Activated naive CD8-positive, alpha-beta T cell treated with anti-CD3 and anti-CD28 coated beads, Interleukin-2, amount 10 ng/mL, durations not matched to agents 7 days and 5 days (primary cell): ENCODE measurements at regions of chr1 and their contacts with region 1.

Region 1: GRCh38 chr1:110619412-110620249 is 13.5 kb upstream of the KCNA2 start:
- DNase-seq: peak; percentile 97
- ATAC-seq: peak; percentile 88
- H3K4me3 Mint-ChIP-seq: peak overlapping the region; percentile 86
- H3K27ac Mint-ChIP-seq: peak overlapping the region; percentile 90
- H3K4me1 Mint-ChIP-seq: peaks cover 27% of the 10 kb centered on the region
- H3K27me3 Mint-ChIP-seq: peaks cover 3% of the 10 kb centered on the region

Region 2: GRCh38 chr1:110524311-110525251 is 95.0 kb before region 1 on chr1:
- POLR2A ChIA-PET with region 1: no interaction called
- DNase-seq: peak; percentile 62
- ATAC-seq: peak; percentile 80
- H3K4me3 Mint-ChIP-seq: peak overlapping the region; percentile 53
- H3K27ac Mint-ChIP-seq: no peak overlapping the region
- H3K4me1 Mint-ChIP-seq: peaks cover 3% of the 10 kb centered on the region
- H3K27me3 Mint-ChIP-seq: peaks cover 30% of the 10 kb centered on the region

Region 3: GRCh38 chr1:110674337-110675059 is 54.9 kb after region 1 on chr1 and contains the start of gene KCNA3:
- POLR2A ChIA-PET with region 1: interaction called, 46 read pairs
- DNase-seq: peak; percentile 82
- ATAC-seq: peak; percentile 35
- H3K4me3 Mint-ChIP-seq: peak within 1 kb of the TSS; percentile 100
- H3K27ac Mint-ChIP-seq: peak within 1 kb of the TSS; percentile 99
- H3K4me1 Mint-ChIP-seq: peaks cover 31% of the 10 kb centered on the region
- H3K27me3 Mint-ChIP-seq: no peaks in the 10 kb centered on the region
- total RNA-seq, gene KCNA3: 68.4 to 74.0 TPM

Region 4: GRCh38 chr1:110766025-110766647 is 146.5 kb after region 1 on chr1:
- POLR2A ChIA-PET with region 1: interaction called, 24 read pairs
- DNase-seq: no peak
- ATAC-seq: peak; percentile 78
- H3K4me3 Mint-ChIP-seq: peak overlapping the region; percentile 58
- H3K27ac Mint-ChIP-seq: peak overlapping the region; percentile 32
- H3K4me1 Mint-ChIP-seq: peaks cover 10% of the 10 kb centered on the region
- H3K27me3 Mint-ChIP-seq: peaks cover 28% of the 10 kb centered on the region

Region 5: DNA sequence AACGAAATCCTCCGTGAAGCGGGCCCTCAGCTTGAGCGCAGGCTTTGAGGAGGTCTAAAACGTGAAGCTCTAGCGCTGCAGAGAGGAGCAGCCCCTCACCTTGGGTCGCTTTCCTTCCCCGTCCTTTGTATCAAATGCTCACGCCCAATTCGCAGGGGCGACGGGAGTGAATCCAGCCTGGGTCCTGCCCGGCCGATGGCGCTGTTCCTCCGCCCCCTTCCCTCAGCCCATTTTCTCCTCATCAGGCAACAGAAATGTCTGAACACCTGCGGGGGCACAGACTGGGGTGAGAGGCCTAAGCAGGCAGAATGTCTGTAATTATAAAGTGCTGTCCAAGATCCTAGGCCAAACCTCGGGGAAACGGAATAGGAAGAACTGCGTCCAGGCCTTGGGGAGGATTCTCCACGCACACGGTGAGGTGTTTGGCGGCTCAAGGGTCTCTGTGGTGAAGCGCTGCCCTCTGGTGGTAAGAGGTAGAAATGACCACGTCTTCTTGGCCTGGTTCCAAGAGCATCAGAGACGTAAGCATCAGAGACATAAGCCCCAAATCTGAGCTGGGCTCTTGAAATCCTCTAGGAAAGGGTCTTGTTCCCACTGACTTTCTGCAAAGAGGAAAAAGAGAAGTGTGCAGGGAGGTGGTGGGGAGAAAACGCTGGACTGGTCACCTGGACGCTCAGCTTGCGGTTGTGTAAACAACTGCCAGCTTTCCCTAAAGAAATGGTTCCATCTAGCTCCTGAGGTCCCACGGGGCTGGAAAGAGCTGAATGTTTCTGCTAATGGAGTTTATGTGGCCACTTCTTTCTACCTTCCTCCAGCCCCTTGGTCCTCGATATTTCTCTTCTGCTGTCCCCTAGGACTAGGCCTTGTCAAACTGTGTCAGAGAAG is 161.2 kb after region 1 on chr1:
- POLR2A ChIA-PET with region 1: interaction called, 11 read pairs
- DNase-seq: peak; percentile 71
- ATAC-seq: peak; percentile 73
- H3K4me3 Mint-ChIP-seq: peak overlapping the region; percentile 11
- H3K27ac Mint-ChIP-seq: no peak overlapping the region
- H3K4me1 Mint-ChIP-seq: peaks cover 20% of the 10 kb centered on the region
- H3K27me3 Mint-ChIP-seq: peaks cover 8% of the 10 kb centered on the region